Common myeloid progenitor, CD34-positive (primary cell): ENCODE measurements at regions of chr14 and their contacts with region 1.

Region 1: DNA sequence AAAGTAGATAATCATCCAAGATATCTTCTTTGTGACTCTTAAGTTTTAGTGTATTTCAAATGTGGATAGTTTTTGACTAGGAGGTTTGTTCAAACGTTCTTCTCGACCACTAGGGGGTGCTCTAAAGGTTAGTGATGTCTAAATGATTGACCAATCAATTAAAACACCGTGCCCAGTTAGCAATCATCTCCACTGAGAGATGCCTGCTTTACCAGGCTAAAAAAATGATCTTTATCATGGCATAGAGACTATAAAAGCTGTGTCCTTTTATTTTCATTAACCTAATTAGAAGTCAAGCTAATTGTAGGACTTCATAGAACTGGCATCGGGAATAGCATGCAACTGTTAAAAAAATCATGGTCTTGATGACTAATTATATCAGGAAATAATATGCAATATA is 153.9 kb downstream of the PRKCH start:
- DNase-seq: peak; percentile 70 to 78 (median 76)
- H3K4me3 ChIP-seq: peak overlapping the region in 1 of 7 experiments; percentile 16
- H3K27ac ChIP-seq: peak overlapping the region in 1 of 2 experiments; percentile 93
- H3K4me1 ChIP-seq: peaks cover 61 to 98% (median 85%) of the 10 kb centered on the region in 4 experiments
- H3K27me3 ChIP-seq: no peaks in the 10 kb centered on the region

Region 2: GRCh38 chr14:61409776-61410175 is 65.5 kb before region 1 on chr14:
- CTCF ChIA-PET with region 1: no interaction called
- POLR2A ChIA-PET with region 1: no interaction called
- DNase-seq: no peak
- H3K4me3 ChIP-seq: no peak overlapping the region
- H3K27ac ChIP-seq: no peak overlapping the region
- H3K4me1 ChIP-seq: peaks cover 0 to 14% (median 5%) of the 10 kb centered on the region in 4 experiments
- H3K27me3 ChIP-seq: no peaks in the 10 kb centered on the region

Region 3: GRCh38 chr14:61461808-61462275 is 13.5 kb before region 1 on chr14:
- CTCF ChIA-PET with region 1: interaction called, 12 read pairs
- POLR2A ChIA-PET with region 1: interaction called, 4 read pairs
- DNase-seq: peak; percentile 69 to 84 (median 80)
- H3K4me3 ChIP-seq: no peak overlapping the region
- H3K27ac ChIP-seq: no peak overlapping the region
- H3K4me1 ChIP-seq: peaks cover 0 to 16% (median 6%) of the 10 kb centered on the region in 4 experiments
- H3K27me3 ChIP-seq: no peaks in the 10 kb centered on the region

Region 4: GRCh38 chr14:61553725-61554641 is 78.7 kb after region 1 on chr14:
- CTCF ChIA-PET with region 1: interaction called, 11 read pairs
- POLR2A ChIA-PET with region 1: interaction called, 3 read pairs
- DNase-seq: no peak
- H3K4me3 ChIP-seq: no peak overlapping the region
- H3K27ac ChIP-seq: peak overlapping the region in 1 of 2 experiments; percentile 62
- H3K4me1 ChIP-seq: peaks cover 11 to 29% (median 20%) of the 10 kb centered on the region in 4 experiments
- H3K27me3 ChIP-seq: no peaks in the 10 kb centered on the region

Region 5: GRCh38 chr14:61719344-61720293 is 244.3 kb after region 1 on chr14:
- CTCF ChIA-PET with region 1: interaction called, 17 read pairs
- POLR2A ChIA-PET with region 1: interaction called, 6 read pairs
- DNase-seq: peak; percentile 67 to 94 (median 89)
- H3K4me3 ChIP-seq: peak overlapping the region in 6 of 7 experiments; percentile 24 to 56 (median 44)
- H3K27ac ChIP-seq: peak overlapping the region; percentile 84 to 85
- H3K4me1 ChIP-seq: peaks cover 34 to 71% (median 44%) of the 10 kb centered on the region in 4 experiments
- H3K27me3 ChIP-seq: no peaks in the 10 kb centered on the region

Region 6: GRCh38 chr14:61837336-61838229 is 362.3 kb after region 1 on chr14:
- CTCF ChIA-PET with region 1: interaction called, 16 read pairs
- POLR2A ChIA-PET with region 1: no interaction called
- DNase-seq: peak; percentile 76 to 88 (median 81)
- H3K4me3 ChIP-seq: no peak overlapping the region
- H3K27ac ChIP-seq: no peak overlapping the region
- H3K4me1 ChIP-seq: no peaks in the 10 kb centered on the region
- H3K27me3 ChIP-seq: peaks cover 0 to 3% (median 0%) of the 10 kb centered on the region in 5 experiments